Breast epithelium (tissue), 4 donors: ENCODE measurements at regions of chr3 and their contacts with region 1.

Region 1: DNA sequence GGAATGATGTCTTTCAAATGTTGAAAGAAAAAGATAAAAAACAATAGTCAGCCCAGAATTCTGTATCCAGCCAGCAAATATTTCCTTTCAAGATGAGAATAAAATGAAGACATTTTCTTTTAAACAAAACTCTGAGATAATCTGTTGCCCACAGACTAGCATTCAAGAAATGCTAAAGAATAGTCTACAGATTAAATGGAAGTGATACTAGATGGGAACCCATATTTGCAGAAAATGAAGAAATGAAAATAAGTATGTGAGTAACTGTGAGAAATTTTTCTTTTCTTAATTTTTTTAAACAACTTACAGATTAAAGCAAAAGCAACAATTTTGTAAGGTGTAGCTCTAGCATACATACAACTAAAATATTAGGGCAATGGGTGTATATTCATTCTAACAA is 469.8 kb downstream of the IGSF11 start:
- DNase-seq: no peak
- H3K4me3 ChIP-seq: no peak overlapping the region
- H3K27ac ChIP-seq: no peak overlapping the region
- H3K4me1 ChIP-seq: no peaks in the 10 kb centered on the region
- H3K27me3 ChIP-seq: no peaks in the 10 kb centered on the region
- CTCF ChIP-seq: no peak
- POLR2A ChIP-seq: no peak

Region 2: GRCh38 chr3:117165601-117166051 is 1399.2 kb before region 1 on chr3:
- intact Hi-C with region 1: loop called (anchors 5 kb)
- DNase-seq: no peak
- H3K4me3 ChIP-seq: no peak overlapping the region
- H3K27ac ChIP-seq: no peak overlapping the region
- H3K4me1 ChIP-seq: no peaks in the 10 kb centered on the region
- H3K27me3 ChIP-seq: no peaks in the 10 kb centered on the region
- CTCF ChIP-seq: no peak
- POLR2A ChIP-seq: no peak

Region 3: DNA sequence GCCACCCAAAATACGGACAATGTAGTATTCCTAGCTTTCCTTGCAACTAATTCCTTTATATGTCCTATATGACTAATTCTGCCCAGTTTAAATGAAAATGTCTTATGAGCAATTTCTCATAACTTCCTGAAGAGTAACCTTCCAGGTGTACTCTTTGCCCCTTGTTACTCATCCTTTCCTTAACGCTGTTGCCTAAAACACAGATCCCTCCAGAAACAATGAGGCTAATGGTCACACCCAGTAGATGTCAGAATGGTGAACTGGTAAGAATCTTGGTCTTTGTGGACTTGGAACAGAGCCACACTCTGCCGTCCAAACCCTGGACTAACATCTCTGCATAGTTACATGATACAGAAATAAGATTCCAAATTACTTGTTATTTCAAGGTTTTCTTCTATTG is 28.0 kb before region 1 on chr3:
- intact Hi-C with region 1: no loop called
- DNase-seq: no peak
- H3K4me3 ChIP-seq: no peak overlapping the region
- H3K27ac ChIP-seq: no peak overlapping the region
- H3K4me1 ChIP-seq: no peaks in the 10 kb centered on the region
- H3K27me3 ChIP-seq: no peaks in the 10 kb centered on the region
- CTCF ChIP-seq: no peak
- POLR2A ChIP-seq: no peak